ENCODE measurements at regions of chr6 and their contacts with region 1.

Region 1: GRCh38 chr6:95321126-95321525 is 256.2 kb upstream of the MANEA start:
- DNase-seq: no peak
- H3K4me3 Mint-ChIP-seq: no peak overlapping the region
- H3K27ac Mint-ChIP-seq: no peak overlapping the region
- H3K4me1 Mint-ChIP-seq: no peaks in the 10 kb centered on the region
- H3K27me3 Mint-ChIP-seq: no peaks in the 10 kb centered on the region

Region 2: DNA sequence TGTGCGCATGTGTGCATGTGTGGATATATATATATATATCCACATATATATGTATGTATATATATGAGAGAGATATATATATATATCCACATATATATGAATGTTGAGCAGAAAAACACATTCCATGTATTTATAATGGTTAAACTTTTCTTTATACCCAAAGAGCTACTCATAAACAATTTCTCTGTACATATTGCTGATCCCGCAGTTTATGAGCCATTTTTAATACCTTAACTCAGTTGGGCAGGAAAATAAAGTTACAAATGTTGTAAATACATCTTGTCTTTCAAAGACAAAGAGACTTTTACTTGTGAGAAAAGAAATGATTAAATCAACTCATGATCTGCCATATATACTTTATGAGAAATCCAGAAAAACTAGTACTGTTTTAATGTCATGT is 1883.6 kb before region 1 on chr6:
- intact Hi-C with region 1: loop called (anchors 5 kb)
- DNase-seq: no peak
- H3K4me3 Mint-ChIP-seq: no peak overlapping the region
- H3K27ac Mint-ChIP-seq: no peak overlapping the region
- H3K4me1 Mint-ChIP-seq: no peaks in the 10 kb centered on the region
- H3K27me3 Mint-ChIP-seq: no peaks in the 10 kb centered on the region

Region 3: GRCh38 chr6:95293701-95294426 is 27.3 kb before region 1 on chr6:
- intact Hi-C with region 1: no loop called
- DNase-seq: no peak
- H3K4me3 Mint-ChIP-seq: no peak overlapping the region
- H3K27ac Mint-ChIP-seq: no peak overlapping the region
- H3K4me1 Mint-ChIP-seq: no peaks in the 10 kb centered on the region
- H3K27me3 Mint-ChIP-seq: no peaks in the 10 kb centered on the region